ENCODE measurements at regions of chr9 and their contacts with region 1.

Region 1: DNA sequence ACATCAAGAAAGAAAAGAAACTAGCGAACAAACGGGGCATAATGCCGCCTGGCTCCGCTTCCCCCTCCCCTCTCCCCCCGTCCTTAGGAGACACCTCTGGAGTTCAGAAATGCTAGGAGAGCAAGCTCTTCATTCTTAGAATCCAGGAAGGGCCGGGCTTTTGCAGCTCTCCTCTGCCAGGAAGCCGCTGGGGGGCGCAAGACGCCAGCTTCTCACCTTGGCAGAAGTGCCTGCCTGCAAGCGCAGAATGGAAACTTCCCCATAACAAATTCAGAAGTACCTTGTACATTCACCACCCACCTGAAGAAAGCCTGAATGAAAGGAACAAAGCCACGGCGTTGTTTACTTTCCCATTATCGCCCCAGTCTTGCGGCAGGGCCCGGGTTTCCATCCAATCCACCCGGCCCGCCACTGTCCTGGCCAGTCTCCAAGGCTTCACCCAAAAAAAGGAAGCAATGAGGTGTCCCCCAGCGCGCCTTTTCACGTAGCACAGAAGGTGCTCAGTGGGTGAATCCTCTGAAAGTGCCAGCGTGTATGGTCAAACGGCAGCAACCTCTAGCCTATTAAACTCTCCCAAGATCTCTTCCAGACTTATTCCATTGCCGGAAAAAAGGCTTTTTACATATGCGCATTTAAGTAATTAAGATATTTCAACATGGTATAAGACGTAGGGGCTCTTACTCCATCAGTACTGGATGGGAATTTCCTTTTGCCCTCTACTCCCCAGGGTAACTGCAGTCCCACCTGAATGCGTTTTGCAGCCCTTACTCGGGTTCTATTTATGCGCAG is 1.6 kb upstream of the GADD45G start:
- DNase-seq: peak; percentile 96
- ATAC-seq: peak; percentile 18
- H3K4me3 Mint-ChIP-seq: peak overlapping the region; percentile 77
- H3K27ac Mint-ChIP-seq: peak overlapping the region; percentile 83
- H3K4me1 Mint-ChIP-seq: peaks cover 20% of the 10 kb centered on the region
- H3K27me3 Mint-ChIP-seq: peaks cover 28% of the 10 kb centered on the region
- CTCF ChIP-seq: peak; percentile 66

Region 2: GRCh38 chr9:89542401-89543021 is 60.7 kb before region 1 on chr9:
- CTCF ChIA-PET with region 1: no interaction called
- POLR2A ChIA-PET with region 1: no interaction called
- DNase-seq: no peak
- ATAC-seq: no peak
- H3K4me3 Mint-ChIP-seq: no peak overlapping the region
- H3K27ac Mint-ChIP-seq: no peak overlapping the region
- H3K4me1 Mint-ChIP-seq: peaks cover 20% of the 10 kb centered on the region
- H3K27me3 Mint-ChIP-seq: peaks cover 3% of the 10 kb centered on the region; the same call in 1 of the 2 replicates
- CTCF ChIP-seq: no peak

Region 3: DNA sequence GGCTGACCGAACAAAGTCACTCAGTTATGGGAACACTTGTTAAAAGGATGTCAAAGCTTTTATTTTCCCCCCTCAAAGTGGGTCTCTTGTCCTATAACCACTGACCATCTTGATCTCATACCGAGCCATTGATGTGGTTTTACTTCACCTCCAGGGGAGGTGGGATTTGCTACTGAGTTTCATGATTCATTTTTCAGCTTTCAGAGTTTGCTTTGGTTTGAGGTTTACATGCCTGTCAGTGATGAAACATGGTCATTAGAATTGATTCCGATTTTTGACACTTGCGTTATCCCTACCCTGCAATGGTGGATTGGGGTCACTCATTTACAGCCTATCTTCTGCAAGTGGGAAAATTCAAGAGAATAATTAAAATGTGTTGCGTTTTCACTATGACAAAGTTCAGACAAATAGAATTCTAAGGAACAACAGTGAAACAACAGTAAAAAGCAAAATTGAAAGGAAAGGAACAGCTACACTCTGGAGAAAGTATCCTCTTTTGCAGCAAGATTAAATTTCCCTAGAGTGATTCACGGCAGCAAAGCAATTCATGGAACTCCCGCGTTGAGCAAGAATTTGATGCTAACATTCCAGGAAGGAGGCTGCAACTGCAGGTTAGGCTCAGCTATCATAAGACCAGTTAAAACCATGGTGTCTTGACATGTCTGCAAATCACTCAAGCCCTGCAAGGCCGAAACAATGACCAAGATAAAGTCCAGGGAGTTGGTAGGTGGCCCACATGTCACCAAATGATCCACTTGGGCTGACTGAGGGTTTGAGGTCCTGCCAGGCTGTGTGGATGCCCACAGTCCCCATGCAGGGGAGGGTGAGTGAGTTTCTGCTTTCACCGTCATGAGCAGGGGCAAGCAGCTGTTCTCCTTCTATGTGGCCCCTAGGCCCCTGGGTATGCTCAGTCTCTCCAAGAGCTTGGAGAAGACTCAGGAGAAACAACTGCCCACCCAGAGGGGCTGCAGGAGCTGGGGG is 11.0 kb after region 1 on chr9:
- CTCF ChIA-PET with region 1: interaction called, 46 read pairs
- POLR2A ChIA-PET with region 1: interaction called, 8 read pairs
- DNase-seq: no peak
- ATAC-seq: no peak
- H3K4me3 Mint-ChIP-seq: no peak overlapping the region
- H3K27ac Mint-ChIP-seq: no peak overlapping the region
- H3K4me1 Mint-ChIP-seq: peaks cover 23% of the 10 kb centered on the region
- H3K27me3 Mint-ChIP-seq: peaks cover 17% of the 10 kb centered on the region
- CTCF ChIP-seq: no peak

Region 4: DNA sequence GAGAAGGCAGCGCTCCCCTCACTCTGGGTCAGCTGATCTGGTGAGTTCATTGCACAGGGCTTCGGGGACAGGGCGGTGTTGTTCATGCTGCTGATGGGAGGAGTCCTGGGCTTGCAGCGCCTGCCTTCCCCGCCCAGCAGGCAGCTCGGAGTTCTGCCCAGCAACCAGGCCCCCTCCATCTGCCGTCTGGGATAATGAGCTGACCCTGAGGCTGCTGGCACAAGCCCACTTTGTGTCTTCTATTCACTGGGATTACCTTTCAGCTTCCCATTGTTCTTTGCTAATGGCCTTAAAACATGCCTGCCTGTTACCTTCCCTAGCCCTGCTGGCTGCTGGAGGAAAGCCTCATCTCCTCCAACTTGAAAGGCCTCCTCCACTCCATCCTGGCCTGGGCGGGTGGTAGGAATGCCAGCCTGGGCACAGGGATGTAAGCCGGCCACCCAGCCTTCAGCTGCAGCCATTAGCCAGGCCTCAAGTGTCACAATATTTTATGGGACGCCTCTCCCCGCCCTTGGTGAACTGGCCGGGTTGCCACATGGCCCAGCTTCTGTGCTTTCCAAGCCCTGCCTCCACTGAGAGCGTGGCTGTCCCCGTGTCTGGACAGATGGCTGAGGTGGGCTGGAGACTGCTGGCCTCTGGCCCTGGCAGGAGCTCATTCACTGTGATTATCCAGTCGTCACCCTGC is 72.0 kb after region 1 on chr9:
- CTCF ChIA-PET with region 1: interaction called, 30 read pairs
- POLR2A ChIA-PET with region 1: interaction called, 31 read pairs
- DNase-seq: peak; percentile 61
- ATAC-seq: peak; percentile 77
- H3K4me3 Mint-ChIP-seq: no peak overlapping the region
- H3K27ac Mint-ChIP-seq: no peak overlapping the region
- H3K4me1 Mint-ChIP-seq: peaks cover 68% of the 10 kb centered on the region
- H3K27me3 Mint-ChIP-seq: peaks cover 21% of the 10 kb centered on the region
- CTCF ChIP-seq: no peak

Region 5: GRCh38 chr9:89738137-89738932 is 135.2 kb after region 1 on chr9:
- CTCF ChIA-PET with region 1: interaction called, 28 read pairs
- POLR2A ChIA-PET with region 1: interaction called, 5 read pairs
- DNase-seq: peak; percentile 25
- ATAC-seq: peak; percentile 85
- H3K4me3 Mint-ChIP-seq: no peak overlapping the region
- H3K27ac Mint-ChIP-seq: no peak overlapping the region
- H3K4me1 Mint-ChIP-seq: peaks cover 21% of the 10 kb centered on the region
- H3K27me3 Mint-ChIP-seq: no peaks in the 10 kb centered on the region
- CTCF ChIP-seq: no peak

Region 6: GRCh38 chr9:89774858-89775390 is 171.8 kb after region 1 on chr9:
- CTCF ChIA-PET with region 1: interaction called, 10 read pairs
- POLR2A ChIA-PET with region 1: no interaction called
- DNase-seq: no peak
- ATAC-seq: no peak
- H3K4me3 Mint-ChIP-seq: no peak overlapping the region
- H3K27ac Mint-ChIP-seq: no peak overlapping the region
- H3K4me1 Mint-ChIP-seq: no peaks in the 10 kb centered on the region
- H3K27me3 Mint-ChIP-seq: no peaks in the 10 kb centered on the region; the same call in 1 of the 2 replicates
- CTCF ChIP-seq: no peak

Region 7: DNA sequence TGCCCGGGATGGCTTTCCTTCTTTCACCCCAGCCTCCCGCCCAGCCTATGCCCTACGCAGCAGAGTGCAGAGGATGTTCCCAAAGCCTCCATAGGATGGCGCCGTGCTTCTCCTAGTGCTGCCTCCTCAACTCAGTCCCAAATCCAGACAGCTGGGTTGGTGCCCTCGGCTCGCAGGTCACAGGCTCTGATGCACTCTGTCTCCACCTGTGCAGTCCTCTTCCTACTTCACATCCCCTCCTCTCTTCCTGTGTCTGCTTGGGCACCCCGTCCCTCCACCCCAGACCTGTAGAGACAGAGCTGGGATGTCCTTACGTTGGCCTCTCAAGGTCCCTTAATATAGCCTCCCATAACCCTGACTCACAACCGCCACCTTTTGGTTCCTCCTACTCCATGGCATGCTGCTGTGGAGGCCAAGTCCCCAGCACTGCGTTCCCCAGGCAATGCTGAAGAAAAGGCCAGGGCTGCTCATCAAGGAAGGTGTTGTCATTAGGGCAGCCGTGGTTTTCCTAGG is 316.1 kb after region 1 on chr9:
- CTCF ChIA-PET with region 1: interaction called, 63 read pairs
- POLR2A ChIA-PET with region 1: interaction called, 4 read pairs
- DNase-seq: peak; percentile 67
- ATAC-seq: peak; percentile 94
- H3K4me3 Mint-ChIP-seq: no peak overlapping the region
- H3K27ac Mint-ChIP-seq: no peak overlapping the region
- H3K4me1 Mint-ChIP-seq: peaks cover 45% of the 10 kb centered on the region
- H3K27me3 Mint-ChIP-seq: no peaks in the 10 kb centered on the region
- CTCF ChIP-seq: peak; percentile 33; the same call in 1 of the 2 replicates

Region 8: DNA sequence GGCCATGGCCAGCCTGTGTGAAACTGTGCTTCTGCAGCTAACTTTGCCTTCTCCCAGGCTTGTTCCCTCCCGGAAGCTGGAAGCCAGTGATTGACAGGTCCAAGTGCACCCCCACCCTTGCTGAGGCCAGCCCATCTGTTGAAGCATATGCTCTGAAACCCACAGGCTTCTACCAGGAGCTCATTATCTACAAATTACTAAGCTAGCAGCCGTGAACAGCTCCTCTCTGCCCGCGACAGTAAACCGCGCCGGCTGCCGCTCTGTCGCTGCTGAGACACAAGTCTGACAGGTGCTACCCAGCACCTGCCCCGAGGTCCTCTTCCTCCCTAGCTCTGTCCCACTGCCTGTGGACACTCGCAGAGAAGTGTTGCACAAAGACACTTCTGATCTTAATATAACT is 492.5 kb after region 1 on chr9:
- CTCF ChIA-PET with region 1: interaction called, 157 read pairs
- POLR2A ChIA-PET with region 1: interaction called, 3 read pairs
- DNase-seq: no peak
- ATAC-seq: no peak
- H3K4me3 Mint-ChIP-seq: no peak overlapping the region
- H3K27ac Mint-ChIP-seq: no peak overlapping the region
- H3K4me1 Mint-ChIP-seq: no peaks in the 10 kb centered on the region
- H3K27me3 Mint-ChIP-seq: no peaks in the 10 kb centered on the region
- CTCF ChIP-seq: no peak

Measured in WTC11 (cell line).